ENCODE measurements at regions of chr2 and their contacts with region 1.

Region 1: DNA sequence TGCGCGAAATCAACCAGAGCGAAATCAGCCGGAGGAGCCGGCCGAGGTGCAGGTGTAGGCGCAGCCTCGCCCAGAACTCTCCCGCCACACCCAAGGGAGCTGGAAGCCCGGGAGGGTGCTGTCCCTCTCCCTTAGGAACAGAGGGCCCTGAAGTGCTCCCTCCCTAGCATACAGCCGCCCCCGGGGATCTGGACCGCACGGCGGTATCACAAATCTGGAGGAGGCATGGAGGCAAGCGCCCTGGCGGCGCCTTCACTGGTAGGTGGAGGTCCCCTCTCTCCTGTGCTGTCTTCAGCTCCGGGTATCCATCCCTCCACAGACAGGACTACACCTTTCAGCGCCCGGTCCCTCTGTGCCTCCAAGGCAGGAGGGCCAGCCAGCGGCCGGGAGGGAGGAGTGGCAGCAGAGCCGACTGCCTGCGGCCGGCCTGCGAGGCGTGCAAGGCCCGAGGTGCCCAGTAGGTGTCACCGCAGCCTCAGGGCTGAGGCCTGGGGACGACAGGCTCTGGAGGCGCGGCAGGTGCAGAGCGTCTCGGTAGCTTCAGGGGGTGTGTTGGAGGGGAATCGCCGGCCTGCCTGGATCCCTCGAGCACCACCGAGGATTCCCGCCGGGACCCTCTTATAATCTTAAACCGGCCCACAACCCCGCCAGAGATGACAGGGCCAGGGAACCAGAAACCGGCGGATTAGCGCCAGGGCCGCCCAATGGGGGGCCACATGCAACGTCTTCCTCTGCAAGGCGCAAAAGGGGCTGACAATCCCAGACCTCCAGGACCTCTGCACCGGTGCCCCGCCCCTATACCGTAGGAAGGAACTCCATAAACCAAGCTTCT is 2.8 kb downstream of the IHH start:
- DNase-seq: peak; percentile 94
- H3K4me3 Mint-ChIP-seq: peak overlapping the region; percentile 48
- H3K27ac Mint-ChIP-seq: no peak overlapping the region
- H3K4me1 Mint-ChIP-seq: peaks cover 10% of the 10 kb centered on the region
- H3K27me3 Mint-ChIP-seq: peaks cover 61% of the 10 kb centered on the region

Region 2: DNA sequence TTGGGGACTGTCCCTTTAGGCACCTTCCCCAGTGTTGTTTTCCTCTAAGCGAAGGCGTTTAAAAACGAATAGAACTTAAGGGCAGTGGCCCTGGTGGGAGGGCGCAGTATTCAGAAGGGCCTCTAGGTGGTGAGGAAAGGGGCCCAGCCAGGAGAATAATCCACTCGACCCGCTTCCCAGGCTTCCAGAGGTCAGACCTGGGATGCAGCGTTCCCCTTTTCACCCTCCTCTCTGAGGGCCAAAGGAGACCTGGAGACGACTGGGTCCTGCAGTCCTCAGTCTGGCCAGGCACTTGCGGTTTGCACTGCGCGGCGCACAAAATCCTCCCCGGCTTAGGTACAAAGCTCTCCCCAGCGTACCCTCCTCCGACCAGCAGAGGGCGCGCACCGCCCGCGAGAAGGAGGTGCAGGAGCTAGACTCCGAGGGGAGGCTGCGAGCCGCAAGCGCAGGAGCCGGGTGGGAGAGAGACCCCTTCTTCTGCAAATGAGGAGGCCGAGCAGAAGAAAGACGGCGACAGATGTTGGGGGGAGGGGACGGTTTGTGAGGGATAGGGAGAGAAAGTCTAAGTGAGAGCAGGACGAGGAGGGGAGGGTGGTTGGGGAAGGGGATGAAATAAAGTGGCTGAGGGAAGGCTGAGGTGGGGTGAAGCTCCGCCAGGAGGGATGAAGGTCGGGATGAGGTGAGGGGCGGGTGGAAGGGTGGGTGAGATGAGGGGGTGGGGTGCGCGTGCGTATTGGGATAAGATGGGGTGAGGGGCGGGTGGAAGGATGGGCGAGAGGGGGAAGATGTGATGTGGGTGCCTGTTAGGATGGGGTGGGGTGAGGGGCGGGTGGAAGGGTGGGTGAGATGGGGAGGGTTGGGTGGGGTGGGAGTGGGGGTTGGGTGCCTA is 77.8 kb before region 1 on chr2:
- intact Hi-C with region 1: loop called (anchors 1 kb)
- DNase-seq: peak; percentile 94
- H3K4me3 Mint-ChIP-seq: peak overlapping the region; percentile 64
- H3K27ac Mint-ChIP-seq: peak overlapping the region; percentile 50
- H3K4me1 Mint-ChIP-seq: peaks cover 10% of the 10 kb centered on the region
- H3K27me3 Mint-ChIP-seq: peaks cover 74% of the 10 kb centered on the region

Region 3: DNA sequence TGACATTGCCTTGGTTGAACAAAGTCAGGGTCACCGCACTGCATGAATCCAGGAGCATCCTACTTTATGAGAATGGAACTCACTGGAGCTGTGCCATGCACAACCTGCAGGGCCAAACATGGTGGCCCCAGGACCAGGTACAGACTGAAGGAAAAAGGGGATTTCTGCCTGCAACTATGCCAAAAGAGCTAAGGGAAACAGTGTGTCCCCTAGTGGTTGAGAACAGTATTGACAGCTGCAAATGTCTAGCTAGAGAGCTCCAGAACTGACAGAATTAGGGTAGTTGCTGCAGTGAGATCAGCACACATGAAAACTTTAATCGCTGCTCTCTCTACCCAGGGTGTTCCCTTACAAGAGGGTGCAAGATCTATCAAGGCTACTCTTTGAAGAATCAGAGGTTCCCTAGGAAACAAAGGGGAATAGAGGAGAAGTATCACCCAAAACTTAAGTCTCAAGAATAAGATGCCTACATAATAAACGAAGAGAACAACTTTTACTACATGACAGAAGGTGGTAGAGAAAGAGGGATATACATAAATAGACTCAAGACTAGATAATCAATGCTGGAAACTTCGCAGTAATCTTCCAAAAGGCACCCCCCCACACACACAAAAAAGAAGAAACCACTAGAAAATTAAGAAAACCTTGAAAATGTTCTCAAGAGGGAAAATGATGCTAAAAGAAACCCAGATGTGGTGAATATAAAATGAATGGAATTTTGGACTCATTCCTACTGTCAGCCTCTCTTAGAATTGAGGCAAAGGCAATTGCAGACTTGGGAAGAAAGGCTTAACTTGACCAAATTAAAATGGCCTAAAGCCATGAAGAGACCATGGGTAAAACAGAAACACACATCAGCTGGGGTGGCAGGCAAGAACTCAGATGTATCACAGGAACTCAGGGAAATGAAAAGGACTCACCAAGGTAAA is 46.4 kb after region 1 on chr2:
- intact Hi-C with region 1: loop called (anchors 5 kb)
- DNase-seq: peak; percentile 74
- H3K4me3 Mint-ChIP-seq: peak overlapping the region; percentile 7
- H3K27ac Mint-ChIP-seq: peak overlapping the region; percentile 26
- H3K4me1 Mint-ChIP-seq: peaks cover 15% of the 10 kb centered on the region
- H3K27me3 Mint-ChIP-seq: no peaks in the 10 kb centered on the region

Region 4: GRCh38 chr2:219155054-219155644 is 97.2 kb after region 1 on chr2:
- intact Hi-C with region 1: loop called (anchors 1 kb)
- DNase-seq: peak; percentile 84
- H3K4me3 Mint-ChIP-seq: no peak overlapping the region
- H3K27ac Mint-ChIP-seq: no peak overlapping the region
- H3K4me1 Mint-ChIP-seq: peaks cover 8% of the 10 kb centered on the region
- H3K27me3 Mint-ChIP-seq: no peaks in the 10 kb centered on the region

Region 5: DNA sequence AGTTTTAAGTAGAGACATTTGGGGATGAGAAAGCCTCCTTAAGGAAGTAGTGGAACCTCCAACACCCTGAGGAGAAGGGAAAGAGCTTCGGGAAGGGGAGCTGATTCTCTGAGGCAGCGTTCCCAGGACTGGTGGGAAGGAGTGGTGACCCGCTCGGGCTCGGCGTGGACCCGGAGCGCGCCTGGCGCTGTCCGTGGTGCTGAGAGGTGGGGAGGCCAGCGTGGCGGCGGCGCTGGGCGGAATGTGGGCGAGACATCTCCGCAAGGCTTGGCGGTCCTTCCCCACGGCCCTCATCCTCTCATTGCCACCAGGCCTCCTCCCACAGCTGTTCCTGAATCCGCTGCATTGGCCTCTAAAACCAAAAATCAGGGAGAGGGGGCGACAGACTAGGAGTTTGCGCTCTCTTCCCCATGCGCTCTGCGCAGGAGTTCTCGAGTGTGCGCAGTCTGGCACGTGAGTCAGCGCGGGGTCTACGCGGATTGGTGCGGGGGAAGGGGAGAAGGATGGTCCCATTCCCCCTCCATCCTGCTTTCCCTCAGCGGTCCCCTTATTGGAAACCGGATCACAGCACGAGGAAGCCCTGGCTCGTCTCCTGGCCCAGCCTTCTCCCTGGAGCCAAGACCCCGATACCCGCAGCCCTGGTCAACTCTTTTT is 273.8 kb after region 1 on chr2:
- intact Hi-C with region 1: loop called (anchors 10 kb)
- DNase-seq: peak; percentile 82
- H3K4me3 Mint-ChIP-seq: no peak overlapping the region
- H3K27ac Mint-ChIP-seq: no peak overlapping the region
- H3K4me1 Mint-ChIP-seq: no peaks in the 10 kb centered on the region
- H3K27me3 Mint-ChIP-seq: peaks cover 50% of the 10 kb centered on the region

Measured in activated CD4-positive, alpha-beta T cell treated with anti-CD3 and anti-CD28 coated beads, Interleukin-2, amount 10 ng/mL, durations not matched to agents 24 days and 14 days (primary cell).